Right cardiac atrium (tissue), 5 donors: ENCODE measurements at regions of chr11 and their contacts with region 1.

Region 1: GRCh38 chr11:19071255-19071654 is 10.7 kb upstream of the MRGPRX2 start:
- DNase-seq: peak; percentile 70 to 87 (median 83)
- ATAC-seq: peak; percentile 90 to 94
- H3K4me3 ChIP-seq: no peak overlapping the region
- H3K27ac ChIP-seq: no peak overlapping the region
- H3K4me1 ChIP-seq: no peaks in the 10 kb centered on the region
- H3K27me3 ChIP-seq: no peaks in the 10 kb centered on the region

Region 2: DNA sequence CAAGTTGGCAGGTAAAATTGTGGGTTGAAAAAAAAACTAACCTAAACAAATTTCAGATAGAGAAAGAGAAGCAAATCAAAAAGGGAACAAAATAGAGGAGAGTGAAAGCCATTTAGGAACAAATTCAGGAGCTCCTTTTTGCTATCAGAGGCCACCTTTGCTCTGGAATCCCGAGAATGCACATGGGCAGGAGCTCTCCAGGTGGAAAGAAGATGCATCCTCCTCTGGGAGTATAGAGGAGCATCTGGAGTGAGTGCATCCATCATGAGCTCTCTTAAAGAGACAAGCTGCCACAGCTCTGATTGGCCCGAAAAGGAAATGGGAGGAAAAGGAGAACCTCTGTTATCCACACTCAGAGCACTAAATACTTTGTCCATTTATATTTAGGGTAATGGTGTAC is 158.4 kb before region 1 on chr11:
- intact Hi-C with region 1: no loop called
- DNase-seq: no peak
- ATAC-seq: no peak
- H3K4me3 ChIP-seq: no peak overlapping the region
- H3K27ac ChIP-seq: no peak overlapping the region
- H3K4me1 ChIP-seq: no peaks in the 10 kb centered on the region
- H3K27me3 ChIP-seq: no peaks in the 10 kb centered on the region

Region 3: GRCh38 chr11:19160847-19161246 is 89.6 kb after region 1 on chr11:
- intact Hi-C with region 1: loop called in 2 of 4 experiments (anchors 10 kb)
- DNase-seq: no peak
- ATAC-seq: no peak
- H3K4me3 ChIP-seq: no peak overlapping the region
- H3K27ac ChIP-seq: no peak overlapping the region
- H3K4me1 ChIP-seq: no peaks in the 10 kb centered on the region
- H3K27me3 ChIP-seq: no peaks in the 10 kb centered on the region

Region 4: GRCh38 chr11:19311308-19312030 is 240.2 kb after region 1 on chr11:
- intact Hi-C with region 1: loop called in 1 of 4 experiments (anchors 10 kb)
- DNase-seq: peak; percentile 67 to 85 (median 73)
- ATAC-seq: peak; percentile 85 to 86
- H3K4me3 ChIP-seq: no peak overlapping the region
- H3K27ac ChIP-seq: no peak overlapping the region
- H3K4me1 ChIP-seq: no peaks in the 10 kb centered on the region
- H3K27me3 ChIP-seq: no peaks in the 10 kb centered on the region